ENCODE measurements at regions of chr4 and their contacts with region 1.

Region 1: DNA sequence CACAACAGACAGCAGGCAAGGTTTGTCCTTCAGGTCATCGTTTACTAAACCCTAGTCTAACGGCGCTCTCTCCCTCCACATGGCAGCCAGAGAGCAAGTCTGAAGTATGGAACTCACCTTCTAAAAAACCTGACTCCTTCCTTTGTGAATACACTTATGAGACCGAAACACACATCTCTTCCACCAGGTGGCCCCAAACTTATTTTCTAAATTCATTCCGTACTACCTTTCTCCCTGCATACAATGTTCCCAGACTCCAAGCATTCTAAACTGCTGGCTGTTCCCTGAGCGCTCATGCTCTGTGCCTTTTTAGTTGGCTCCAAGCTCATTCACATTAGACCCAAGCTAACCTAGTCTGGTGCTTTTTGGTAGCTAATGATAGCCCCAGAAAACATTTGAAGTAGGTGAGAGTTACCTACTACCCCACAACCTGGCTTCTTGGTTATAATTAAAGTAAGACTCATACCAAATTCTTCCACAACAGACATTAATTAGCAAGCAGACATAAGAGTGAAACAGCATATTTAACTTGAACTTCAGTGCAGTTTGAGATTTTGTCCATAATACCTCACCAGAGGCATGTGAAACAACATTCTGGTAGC is 67.6 kb upstream of the DCLK2 start:
- DNase-seq: no peak
- ATAC-seq: peak; percentile 77
- H3K4me3 ChIP-seq: no peak overlapping the region
- H3K27ac ChIP-seq: no peak overlapping the region
- H3K4me1 ChIP-seq: peaks cover 0 to 5% of the 10 kb centered on the region in 2 donors
- H3K27me3 ChIP-seq: no peaks in the 10 kb centered on the region

Region 2: DNA sequence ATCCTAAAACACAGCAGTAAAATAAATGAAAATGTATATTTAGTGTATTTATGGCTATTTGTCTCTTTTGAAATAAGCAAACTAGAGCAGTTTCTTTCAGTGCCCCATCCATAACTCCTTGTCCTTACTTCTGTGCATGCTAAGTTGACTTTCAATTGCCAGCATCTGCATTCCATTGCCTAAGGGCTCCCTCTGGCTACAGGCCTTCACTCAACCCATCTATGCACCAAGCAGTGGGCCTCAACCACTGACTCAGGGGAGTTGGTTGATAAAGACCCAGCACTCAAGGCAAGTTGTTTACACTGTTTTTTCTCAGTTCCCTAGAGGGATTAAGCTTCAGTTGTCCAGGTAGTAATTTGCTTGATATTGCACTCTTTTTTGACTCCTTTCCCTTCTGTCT is 460.7 kb before region 1 on chr4:
- intact Hi-C with region 1: no loop called
- DNase-seq: no peak
- ATAC-seq: no peak
- H3K4me3 ChIP-seq: no peak overlapping the region
- H3K27ac ChIP-seq: no peak overlapping the region
- H3K4me1 ChIP-seq: no peaks in the 10 kb centered on the region
- H3K27me3 ChIP-seq: no peaks in the 10 kb centered on the region

Region 3: GRCh38 chr4:149870008-149870407 is 140.6 kb before region 1 on chr4:
- intact Hi-C with region 1: no loop called
- DNase-seq: no peak
- ATAC-seq: no peak
- H3K4me3 ChIP-seq: no peak overlapping the region
- H3K27ac ChIP-seq: no peak overlapping the region
- H3K4me1 ChIP-seq: no peaks in the 10 kb centered on the region
- H3K27me3 ChIP-seq: no peaks in the 10 kb centered on the region

Region 4: GRCh38 chr4:150209140-150209829 is 198.7 kb after region 1 on chr4:
- intact Hi-C with region 1: loop called in 1 of 2 experiments (anchors 2 kb)
- DNase-seq: peak; percentile 76 to 89
- ATAC-seq: peak; percentile 71
- H3K4me3 ChIP-seq: no peak overlapping the region
- H3K27ac ChIP-seq: no peak overlapping the region
- H3K4me1 ChIP-seq: peaks cover 0 to 3% of the 10 kb centered on the region in 2 donors
- H3K27me3 ChIP-seq: no peaks in the 10 kb centered on the region

Region 5: DNA sequence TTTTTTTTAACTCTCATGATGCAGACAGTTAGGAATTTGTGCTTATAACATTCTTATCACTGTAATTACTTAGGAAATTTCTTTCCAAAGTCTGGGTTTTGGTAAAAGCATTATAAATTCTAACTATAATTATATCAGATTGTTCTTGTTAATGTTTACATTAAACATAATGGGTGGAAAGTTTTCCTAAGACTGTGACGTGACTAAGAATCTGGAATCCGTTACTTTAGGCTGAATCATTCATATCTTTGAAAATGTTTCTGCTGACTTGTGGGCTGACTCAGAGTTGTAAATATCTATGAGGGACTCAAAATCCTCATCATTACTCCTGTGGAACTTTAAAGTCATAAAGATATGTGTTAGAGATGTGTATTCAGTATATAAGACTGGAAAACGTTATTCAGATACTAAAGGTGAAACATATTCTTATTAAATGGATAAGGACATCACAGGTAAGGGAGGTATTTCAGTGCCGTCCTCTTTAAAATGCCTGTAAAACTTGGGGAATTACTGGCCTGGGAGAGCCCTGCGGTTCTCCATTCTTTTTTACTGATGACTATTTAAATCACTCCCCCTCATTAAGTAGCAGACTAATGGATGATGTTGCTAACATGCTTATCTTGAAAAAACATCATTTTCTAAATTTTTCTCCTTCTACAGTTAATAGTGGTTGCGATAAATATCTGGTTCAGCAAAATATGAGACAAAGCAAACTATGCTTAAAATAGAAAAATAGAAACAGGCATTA is 226.7 kb after region 1 on chr4:
- intact Hi-C with region 1: loop called in 1 of 2 experiments (anchors 5 kb)
- DNase-seq: no peak
- ATAC-seq: peak; percentile 63
- H3K4me3 ChIP-seq: no peak overlapping the region
- H3K27ac ChIP-seq: peak overlapping the region in 1 of 2 donors; percentile 98
- H3K4me1 ChIP-seq: peaks cover 0 to 4% of the 10 kb centered on the region in 2 donors
- H3K27me3 ChIP-seq: no peaks in the 10 kb centered on the region